ENCODE measurements at regions of chr12 and their contacts with region 1.

Region 1: DNA sequence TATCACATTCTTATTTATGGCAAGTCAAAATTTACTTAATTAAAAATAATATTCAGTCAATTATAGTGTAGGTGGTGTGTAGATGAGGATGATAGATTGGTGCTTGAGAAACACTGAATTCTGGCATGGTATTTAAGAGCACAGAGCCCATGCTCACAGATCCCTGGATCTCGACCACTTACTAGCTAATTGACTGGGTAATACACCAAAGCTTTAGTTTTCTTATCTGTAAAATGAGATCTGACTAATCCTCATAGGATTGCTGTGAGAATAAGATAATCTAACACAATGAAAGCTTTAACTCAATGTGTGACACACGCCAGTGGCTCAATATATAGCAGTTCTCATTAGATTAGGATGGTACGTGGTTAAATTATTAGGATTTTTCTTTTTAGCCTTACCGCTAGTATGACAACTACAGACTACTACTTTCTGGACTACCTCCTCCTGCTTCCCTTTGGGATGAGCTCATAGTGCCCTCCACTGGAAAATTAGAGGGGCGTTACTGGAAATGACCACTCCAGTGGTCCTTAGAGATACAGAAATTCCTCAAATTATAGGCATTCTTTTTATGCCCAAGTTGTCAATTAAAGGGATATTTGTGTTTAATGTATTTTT is 482.8 kb upstream of the TBX3 start:
- DNase-seq: no peak
- H3K4me3 ChIP-seq: no peak overlapping the region
- H3K27ac ChIP-seq: no peak overlapping the region
- H3K27me3 ChIP-seq: peaks cover 0 to 13% (median 0%) of the 10 kb centered on the region in 45 donors
- CTCF ChIP-seq: peak in 44 of 56 donors; percentile 9 to 69 (median 36)

Region 2: DNA sequence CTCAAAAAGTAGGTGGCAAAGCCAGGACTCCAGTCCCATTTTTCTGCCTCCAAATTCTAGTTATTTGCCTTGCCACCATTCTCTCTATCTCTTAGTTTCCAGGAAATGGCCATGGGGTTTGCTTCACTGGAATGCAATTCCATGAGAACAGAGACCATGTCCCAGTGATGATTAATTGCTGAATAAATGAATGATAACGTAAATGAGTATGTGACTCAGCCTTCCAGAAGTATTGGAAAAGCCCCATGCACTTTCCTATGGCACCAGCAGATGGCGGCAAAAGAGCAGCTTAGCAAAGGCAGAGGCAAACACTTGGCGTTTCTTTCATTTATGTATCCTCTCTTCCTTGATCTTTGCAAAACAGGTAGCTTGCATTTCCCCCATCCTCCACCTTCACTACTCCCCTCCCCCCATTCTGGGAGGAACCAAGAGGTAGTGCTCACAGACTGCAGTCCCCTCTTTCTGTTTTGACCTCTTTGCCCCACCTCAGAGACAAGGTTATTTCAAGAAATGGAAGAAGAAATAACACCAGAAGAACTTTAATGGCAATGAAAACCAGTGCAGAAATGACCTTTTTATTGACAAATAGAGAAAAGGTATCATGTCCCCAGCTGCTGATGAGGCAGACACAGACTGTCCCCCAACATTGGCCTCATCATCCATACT is 504.2 kb before region 1 on chr12:
- intact Hi-C with region 1: loop called in 1 of 2 experiments (anchors 10 kb)
- DNase-seq: peak; percentile 65 to 88 (median 80)
- H3K4me3 ChIP-seq: no peak overlapping the region
- H3K27ac ChIP-seq: no peak overlapping the region
- H3K27me3 ChIP-seq: peaks cover 6 to 89% (median 53%) of the 10 kb centered on the region in 45 donors
- CTCF ChIP-seq: peak; percentile 73 to 99 (median 97)

Region 3: GRCh38 chr12:115294439-115295133 is 127.8 kb after region 1 on chr12:
- intact Hi-C with region 1: no loop called
- DNase-seq: no peak
- H3K4me3 ChIP-seq: no peak overlapping the region
- H3K27ac ChIP-seq: no peak overlapping the region
- H3K27me3 ChIP-seq: peaks cover 0 to 20% (median 0%) of the 10 kb centered on the region in 45 donors
- CTCF ChIP-seq: no peak

Measured in dorsolateral prefrontal cortex (tissue), 120 donors.